ENCODE measurements at regions of chr7 and their contacts with region 1.

Region 1: GRCh38 chr7:42493436-42494238 is 256.6 kb upstream of the GLI3 start:
- DNase-seq: peak; percentile 94
- H3K4me3 Mint-ChIP-seq: peak overlapping the region; percentile 79
- H3K27ac Mint-ChIP-seq: peak overlapping the region; percentile 93
- H3K4me1 Mint-ChIP-seq: peaks cover 29% of the 10 kb centered on the region
- H3K27me3 Mint-ChIP-seq: no peaks in the 10 kb centered on the region
- CTCF ChIP-seq: no peak

Region 2: GRCh38 chr7:41984888-41985287 is 508.7 kb before region 1 on chr7:
- CTCF ChIA-PET with region 1: no interaction called
- POLR2A ChIA-PET with region 1: interaction called, 5 read pairs
- intact Hi-C with region 1: loop called (anchors 5 kb)
- DNase-seq: peak; percentile 45
- H3K4me3 Mint-ChIP-seq: no peak overlapping the region
- H3K27ac Mint-ChIP-seq: no peak overlapping the region
- H3K4me1 Mint-ChIP-seq: peaks cover 24% of the 10 kb centered on the region
- H3K27me3 Mint-ChIP-seq: no peaks in the 10 kb centered on the region
- CTCF ChIP-seq: no peak

Region 3: DNA sequence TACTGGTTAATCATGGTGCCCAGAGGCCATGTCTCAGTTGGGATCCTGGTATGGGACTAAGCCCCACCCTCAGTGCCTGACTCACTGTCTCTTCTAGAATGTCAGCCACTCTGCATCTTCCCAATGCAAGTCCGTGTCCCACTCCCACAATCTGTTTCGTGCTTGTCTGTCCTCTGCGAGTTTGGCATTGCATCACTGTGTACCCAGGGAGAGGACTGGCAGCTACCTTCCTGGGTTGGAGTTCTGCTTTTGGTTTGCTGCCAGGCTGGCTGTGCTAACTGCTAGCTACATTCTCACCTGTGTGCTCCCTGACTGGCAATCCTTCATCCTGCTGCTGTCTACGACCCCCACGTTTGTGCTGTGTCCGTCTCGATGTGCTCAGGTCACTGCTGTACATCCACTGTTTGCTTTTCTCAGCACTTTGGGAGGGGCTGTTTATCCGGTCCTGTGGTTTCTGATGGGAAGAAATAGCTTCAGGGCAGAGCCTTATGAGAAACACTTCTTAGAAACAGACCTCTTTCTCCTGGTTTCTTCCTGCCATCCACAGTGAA is 200.6 kb before region 1 on chr7:
- CTCF ChIA-PET with region 1: interaction called, 3 read pairs
- POLR2A ChIA-PET with region 1: interaction called, 11 read pairs
- intact Hi-C with region 1: no loop called
- DNase-seq: peak; percentile 97
- H3K4me3 Mint-ChIP-seq: peak overlapping the region; percentile 70
- H3K27ac Mint-ChIP-seq: peak overlapping the region; percentile 92
- H3K4me1 Mint-ChIP-seq: peaks cover 28% of the 10 kb centered on the region
- H3K27me3 Mint-ChIP-seq: no peaks in the 10 kb centered on the region
- CTCF ChIP-seq: no peak

Region 4: DNA sequence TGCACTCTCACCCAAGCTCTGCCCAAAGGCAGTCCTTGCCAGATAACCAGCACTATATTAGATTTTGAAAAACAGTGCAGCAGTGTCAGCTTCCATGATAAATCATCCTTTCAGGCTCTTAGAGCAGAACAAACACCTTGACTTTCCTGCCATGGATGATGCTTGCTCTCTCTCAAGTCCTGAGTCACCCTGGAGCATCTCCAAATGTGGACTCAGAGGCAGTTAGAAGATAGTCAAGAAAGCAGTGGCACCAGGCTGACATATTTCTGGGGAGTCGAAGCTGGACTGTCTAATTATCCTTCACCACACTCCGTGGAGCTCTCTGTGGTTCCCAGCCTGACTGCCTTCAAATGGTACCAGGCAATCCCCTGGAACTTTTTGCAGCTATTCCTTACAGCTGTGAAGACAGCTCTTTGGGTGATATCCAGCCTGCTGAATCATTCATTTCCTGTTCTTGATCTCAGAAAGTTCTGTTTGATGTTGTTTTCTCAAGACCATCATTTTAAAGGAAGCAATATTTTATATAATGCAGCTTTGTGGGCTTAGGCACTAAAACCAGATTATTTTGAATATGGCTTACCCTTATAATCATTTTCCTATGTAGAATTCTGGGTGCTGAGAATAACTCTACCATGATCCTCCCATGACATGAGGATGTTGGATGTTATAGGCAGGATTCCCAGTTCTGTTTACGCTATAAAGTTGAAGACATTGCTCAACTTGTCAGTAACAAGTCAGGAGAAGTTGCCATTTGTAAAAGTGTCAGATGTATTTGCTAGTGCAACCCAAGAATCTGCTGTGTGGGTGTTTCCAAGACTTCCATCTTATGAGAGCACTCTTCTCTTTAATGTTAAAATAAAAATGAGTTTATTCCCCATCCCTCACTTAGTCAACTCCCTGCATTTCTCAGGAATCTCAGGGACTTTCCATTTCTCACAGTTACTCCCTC is 184.4 kb after region 1 on chr7:
- CTCF ChIA-PET with region 1: no interaction called
- POLR2A ChIA-PET with region 1: interaction called, 8 read pairs
- intact Hi-C with region 1: loop called (anchors 10 kb)
- DNase-seq: peak; percentile 91
- H3K4me3 Mint-ChIP-seq: peak overlapping the region; percentile 17
- H3K27ac Mint-ChIP-seq: peak overlapping the region; percentile 86
- H3K4me1 Mint-ChIP-seq: peaks cover 36% of the 10 kb centered on the region
- H3K27me3 Mint-ChIP-seq: no peaks in the 10 kb centered on the region
- CTCF ChIP-seq: no peak